Breast epithelium (tissue), 4 donors: ENCODE measurements at regions of chr4 and their contacts with region 1.

Region 1: GRCh38 chr4:38510201-38510600 is 153.8 kb upstream of the KLF3 start:
- DNase-seq: no peak
- H3K4me3 ChIP-seq: no peak overlapping the region
- H3K27ac ChIP-seq: no peak overlapping the region
- H3K4me1 ChIP-seq: no peaks in the 10 kb centered on the region
- H3K27me3 ChIP-seq: no peaks in the 10 kb centered on the region
- CTCF ChIP-seq: no peak
- POLR2A ChIP-seq: no peak

Region 2: DNA sequence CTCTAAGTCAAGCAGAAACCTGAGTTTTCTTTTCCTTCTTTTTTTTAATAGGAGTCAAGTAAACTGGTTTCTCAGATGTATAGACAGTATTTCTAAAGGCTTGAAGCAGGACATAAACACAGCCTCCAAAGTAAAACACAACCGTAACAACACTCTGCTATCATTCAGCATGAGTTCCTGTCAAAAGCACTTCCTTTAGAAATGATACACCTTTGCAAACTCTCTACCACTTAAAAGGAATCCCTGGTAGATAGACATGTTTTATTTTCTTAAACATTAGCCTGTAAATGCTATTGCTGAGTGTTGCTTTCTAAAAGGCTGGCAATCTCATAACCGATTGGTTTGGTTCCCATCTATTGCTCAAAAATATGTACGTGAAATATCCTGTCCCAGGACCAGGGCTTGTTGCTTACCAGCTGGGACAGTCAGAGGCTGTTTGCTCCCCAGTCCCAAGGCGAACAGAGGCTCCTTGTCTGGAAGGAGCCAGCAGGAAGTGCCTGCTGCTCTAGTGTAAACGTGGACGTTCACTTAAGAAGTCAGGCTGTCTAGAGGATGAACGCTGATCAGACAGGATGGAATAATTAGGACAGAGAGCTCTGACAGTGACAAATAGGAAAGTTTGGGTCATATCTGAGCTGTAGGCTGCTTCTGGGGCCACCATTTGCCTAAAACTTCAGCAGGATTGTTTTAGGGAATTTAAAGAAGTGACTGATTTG is 20.1 kb before region 1 on chr4:
- intact Hi-C with region 1: loop called (anchors 2 kb)
- DNase-seq: peak in 1 of 2 donors; percentile 45
- H3K4me3 ChIP-seq: no peak overlapping the region
- H3K27ac ChIP-seq: peak overlapping the region; percentile 60 to 79
- H3K4me1 ChIP-seq: no peaks in the 10 kb centered on the region
- H3K27me3 ChIP-seq: no peaks in the 10 kb centered on the region
- CTCF ChIP-seq: no peak
- POLR2A ChIP-seq: no peak